ENCODE measurements at regions of chr9 and their contacts with region 1.

Region 1: GRCh38 chr9:94639061-94639998 is at the start of gene FBP1:
- DNase-seq: peak; percentile 20 to 50 (median 39)
- ATAC-seq: peak; percentile 75
- H3K4me3 ChIP-seq: peak within 1 kb of the TSS; percentile 69
- H3K4me3 Mint-ChIP-seq: peak within 1 kb of the TSS; percentile 87 to 98 (median 96)
- H3K27ac ChIP-seq: peak within 1 kb of the TSS; percentile 59
- H3K27ac Mint-ChIP-seq: peak within 1 kb of the TSS; percentile 66 to 95 (median 92)
- H3K4me1 ChIP-seq: no peaks in the 10 kb centered on the region
- H3K4me1 Mint-ChIP-seq: peaks cover 13 to 23% (median 17%) of the 10 kb centered on the region in 7 donors
- H3K27me3 ChIP-seq: no peaks in the 10 kb centered on the region
- H3K27me3 Mint-ChIP-seq: peaks cover 0 to 42% (median 0%) of the 10 kb centered on the region in 5 donors
- total RNA-seq, gene FBP1: 0.15 to 26.1 (median 10.5) TPM

Region 2: GRCh38 chr9:94656200-94656599 is 16.9 kb after region 1 on chr9:
- CTCF ChIA-PET with region 1: interaction called, 3 read pairs
- POLR2A ChIA-PET with region 1: interaction called, 5 read pairs
- intact Hi-C with region 1: loop called in 1 of 2 experiments (anchors 1 kb)
- DNase-seq: peak in 8 of 9 donors; percentile 28 to 73 (median 60)
- ATAC-seq: peak; percentile 89
- H3K4me3 ChIP-seq: peak overlapping the region; percentile 49
- H3K4me3 Mint-ChIP-seq: peak overlapping the region; percentile 76 to 92 (median 83)
- H3K27ac ChIP-seq: peak overlapping the region; percentile 66
- H3K27ac Mint-ChIP-seq: peak overlapping the region; percentile 84 to 96 (median 92)
- H3K4me1 ChIP-seq: peaks cover 0 to 15% of the 10 kb centered on the region in 2 donors
- H3K4me1 Mint-ChIP-seq: peaks cover 10 to 31% (median 28%) of the 10 kb centered on the region in 7 donors
- H3K27me3 ChIP-seq: no peaks in the 10 kb centered on the region
- H3K27me3 Mint-ChIP-seq: peaks cover 0 to 6% (median 0%) of the 10 kb centered on the region in 5 donors

Measured in naive thymus-derived CD4-positive, alpha-beta T cell (primary cell).